Right cardiac atrium (tissue), 5 donors: ENCODE measurements at regions of chr19 and their contacts with region 1.

Region 1: DNA sequence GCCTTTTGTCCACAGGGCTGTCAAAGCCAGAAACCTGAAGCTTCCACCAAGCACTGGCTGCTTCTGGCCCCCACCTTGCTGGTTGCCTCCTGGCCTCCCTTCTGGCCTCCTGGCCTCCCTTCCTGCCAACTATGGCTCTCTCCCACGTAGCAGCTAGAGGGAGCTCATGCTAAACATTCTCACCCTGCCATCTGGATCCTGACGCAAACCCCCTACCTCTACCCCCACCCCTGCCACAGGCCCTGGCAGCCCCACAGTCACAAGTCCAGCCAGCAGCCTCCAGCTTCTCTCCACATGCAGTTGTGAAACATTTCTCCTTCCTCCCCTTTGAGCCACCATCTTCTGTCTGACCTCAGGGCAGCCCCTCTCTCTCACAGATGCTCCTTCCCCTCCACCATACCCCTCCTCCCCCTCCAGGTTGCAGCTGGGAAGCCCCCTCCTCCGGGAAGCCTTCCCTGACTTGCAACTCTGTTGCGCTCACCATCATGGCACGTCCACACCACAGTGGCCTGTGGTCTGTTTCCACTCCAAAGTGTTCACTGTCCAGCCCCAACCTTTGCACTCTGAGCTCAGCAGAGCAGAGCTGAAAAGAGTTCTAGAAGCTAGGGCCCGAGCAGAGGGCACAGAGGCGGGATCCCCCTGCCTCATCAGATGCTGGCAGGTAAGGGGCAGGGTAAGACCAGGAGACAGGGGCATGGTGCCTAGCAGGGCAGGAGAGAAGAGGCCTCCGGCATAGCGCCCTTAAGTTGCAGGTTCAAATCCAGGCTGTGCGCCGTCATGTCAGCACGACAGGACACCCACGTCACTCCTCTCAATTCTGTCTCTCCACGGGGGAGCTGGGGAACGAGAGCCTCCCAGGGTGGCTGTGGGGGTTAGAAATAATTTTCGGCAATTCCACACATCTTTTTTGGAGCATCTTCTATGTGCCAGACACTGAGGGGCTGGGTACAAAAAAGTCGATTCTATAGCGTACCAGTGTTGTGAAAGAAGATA is 7.3 kb downstream of the ADGRL1 start:
- DNase-seq: no peak
- ATAC-seq: no peak
- H3K4me3 ChIP-seq: no peak overlapping the region
- H3K27ac ChIP-seq: no peak overlapping the region
- H3K4me1 ChIP-seq: no peaks in the 10 kb centered on the region
- H3K27me3 ChIP-seq: no peaks in the 10 kb centered on the region

Region 2: DNA sequence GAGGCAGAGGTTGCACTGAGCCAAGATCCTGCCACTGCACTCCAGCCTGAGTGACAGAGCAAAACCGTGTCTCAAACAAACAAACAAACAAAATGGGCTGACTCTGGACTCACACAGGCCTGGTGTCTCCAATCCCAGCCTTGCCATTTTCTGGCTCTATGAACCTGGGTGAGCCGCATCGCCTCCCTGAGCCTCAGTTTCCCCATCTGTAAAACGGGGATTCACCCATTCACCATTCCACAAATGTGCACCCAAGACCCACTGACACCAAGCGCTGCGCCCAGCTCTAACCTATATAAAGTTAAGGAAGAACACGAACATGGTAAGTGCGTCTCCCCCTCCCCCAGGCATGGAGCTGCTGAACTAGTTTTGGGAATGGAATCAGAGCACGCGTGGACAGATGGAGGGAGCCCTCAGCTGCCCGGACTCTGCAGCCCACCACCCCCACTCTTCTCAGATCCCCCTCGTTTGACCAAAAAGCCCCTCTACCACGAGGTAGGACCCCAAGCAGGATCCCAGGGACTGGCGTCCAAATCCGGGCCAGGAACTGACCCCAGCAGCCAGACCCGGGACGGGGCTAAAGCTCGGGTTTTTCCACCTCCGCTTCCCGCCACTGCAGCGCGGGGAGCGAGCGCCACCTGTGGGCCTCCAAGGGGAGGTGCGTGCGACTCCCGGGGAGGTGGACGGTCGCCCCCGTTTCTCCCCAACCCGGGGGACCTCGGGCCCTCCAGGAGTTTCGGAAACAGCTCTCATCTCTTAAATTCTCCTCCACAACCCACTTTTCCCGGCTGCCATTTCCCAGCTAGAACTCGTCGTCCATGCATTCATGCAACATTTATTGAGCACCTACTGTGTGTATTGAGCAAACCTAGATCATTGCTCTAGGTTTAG is 149.6 kb after region 1 on chr19:
- intact Hi-C with region 1: loop called in 3 of 4 experiments (anchors 5 kb)
- DNase-seq: peak; percentile 61 to 87 (median 86)
- ATAC-seq: peak; percentile 77 to 87
- H3K4me3 ChIP-seq: no peak overlapping the region
- H3K27ac ChIP-seq: no peak overlapping the region
- H3K4me1 ChIP-seq: no peaks in the 10 kb centered on the region
- H3K27me3 ChIP-seq: no peaks in the 10 kb centered on the region